Vagina (tissue), 2 donors: ENCODE measurements at regions of chr2 and their contacts with region 1.

Region 1: GRCh38 chr2:222915092-222915957 is 54.5 kb downstream of the ACSL3 start:
- DNase-seq: no peak
- H3K4me3 ChIP-seq: no peak overlapping the region
- H3K27ac ChIP-seq: no peak overlapping the region
- H3K4me1 ChIP-seq: no peaks in the 10 kb centered on the region
- H3K27me3 ChIP-seq: no peaks in the 10 kb centered on the region
- CTCF ChIP-seq: peak in 1 of 3 experiments; percentile 16
- POLR2A ChIP-seq: no peak

Region 2: DNA sequence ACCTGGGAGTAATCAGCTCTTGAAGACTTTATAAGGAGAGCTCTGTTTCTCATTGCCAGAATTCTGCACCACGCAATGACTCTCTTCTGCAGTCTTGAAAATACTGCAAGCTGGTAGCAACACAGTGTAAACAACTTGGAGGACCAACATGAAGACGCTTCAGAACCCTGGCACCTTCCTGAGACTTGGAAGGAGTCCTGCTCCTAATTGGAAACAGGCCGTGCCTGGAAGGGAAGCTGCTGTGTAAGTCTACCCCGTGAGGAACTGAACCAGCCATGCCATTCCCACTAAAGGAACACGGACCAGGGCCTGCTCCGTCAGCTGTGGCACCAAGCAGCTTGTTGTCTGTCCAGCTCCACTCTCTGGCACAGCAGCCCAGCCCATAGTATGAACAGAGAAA is 787.7 kb before region 1 on chr2:
- intact Hi-C with region 1: no loop called
- DNase-seq: no peak
- H3K4me3 ChIP-seq: no peak overlapping the region
- H3K27ac ChIP-seq: no peak overlapping the region
- H3K4me1 ChIP-seq: no peaks in the 10 kb centered on the region
- H3K27me3 ChIP-seq: no peaks in the 10 kb centered on the region
- CTCF ChIP-seq: no peak
- POLR2A ChIP-seq: no peak

Region 3: GRCh38 chr2:223538920-223539440 is 623.7 kb after region 1 on chr2:
- intact Hi-C with region 1: no loop called
- DNase-seq: no peak
- H3K4me3 ChIP-seq: no peak overlapping the region
- H3K27ac ChIP-seq: no peak overlapping the region
- H3K4me1 ChIP-seq: peaks cover 22% of the 10 kb centered on the region
- H3K27me3 ChIP-seq: no peaks in the 10 kb centered on the region
- CTCF ChIP-seq: no peak
- POLR2A ChIP-seq: no peak

Region 4: GRCh38 chr2:223797811-223798721 is 882.7 kb after region 1 on chr2:
- intact Hi-C with region 1: loop called (anchors 5 kb)
- DNase-seq: no peak
- H3K4me3 ChIP-seq: no peak overlapping the region
- H3K27ac ChIP-seq: no peak overlapping the region
- H3K4me1 ChIP-seq: no peaks in the 10 kb centered on the region
- H3K27me3 ChIP-seq: no peaks in the 10 kb centered on the region
- CTCF ChIP-seq: peak; percentile 44 to 63 (median 51)
- POLR2A ChIP-seq: no peak